SK-N-SH (cell line): ENCODE measurements at regions of chr5 and their contacts with region 1.

Region 1: GRCh38 chr5:159133041-159133741 is 33.5 kb upstream of the EBF1 start:
- DNase-seq: peak; percentile 32
- H3K4me3 ChIP-seq: no peak overlapping the region; a peak in 1 of 4 replicates
- H3K27ac ChIP-seq: no peak overlapping the region
- H3K4me1 ChIP-seq: no peaks in the 10 kb centered on the region; a peak in 2 of 4 replicates
- H3K27me3 ChIP-seq: no peaks in the 10 kb centered on the region; the same call in 1 of the 2 replicates
- CTCF ChIP-seq: peak; percentile 84
- EP300 ChIP-seq: no peak
- RAD21 ChIP-seq: peak; percentile 89

Region 2: DNA sequence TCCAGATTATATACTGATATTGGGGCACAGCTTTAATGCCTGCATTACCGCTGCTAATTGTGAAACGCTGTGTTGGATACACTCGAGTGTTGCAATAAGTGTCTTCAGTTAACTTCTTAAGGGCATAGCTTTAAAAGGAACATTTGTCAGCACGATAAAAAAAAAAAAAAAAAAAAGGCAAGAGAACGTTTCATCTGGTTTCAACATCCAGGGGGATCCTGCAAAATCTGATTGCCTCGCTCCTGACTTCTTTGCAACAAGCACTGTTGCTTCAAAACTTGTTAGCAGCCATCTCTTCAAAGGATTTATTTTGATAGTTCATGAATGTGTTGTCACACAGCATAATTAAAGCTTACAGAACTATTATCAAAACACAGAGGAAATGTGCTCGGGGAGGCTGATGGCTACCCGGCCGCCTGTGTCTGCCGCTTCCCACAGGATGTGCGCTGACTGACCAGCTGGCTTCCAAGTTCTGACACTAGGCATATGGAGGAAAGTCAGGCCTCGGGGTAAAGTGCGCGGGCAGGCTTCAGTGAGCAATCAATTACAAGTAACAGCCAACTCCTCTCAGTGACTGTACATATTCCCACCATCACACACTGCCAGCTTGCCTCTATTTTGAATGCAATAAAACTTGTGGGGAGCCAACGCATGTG is 111.2 kb before region 1 on chr5:
- CTCF ChIA-PET with region 1: no interaction called
- POLR2A ChIA-PET with region 1: no interaction called
- DNase-seq: peak; percentile 70
- H3K4me3 ChIP-seq: peak overlapping the region in 1 of 2 experiments; percentile 12; a peak in 1 of 4 replicates
- H3K27ac ChIP-seq: peak overlapping the region in 1 of 2 experiments; percentile 99; a peak in 3 of 4 replicates
- H3K4me1 ChIP-seq: peaks cover 12 to 33% of the 10 kb centered on the region in 2 experiments; a peak in 3 of 4 replicates
- H3K27me3 ChIP-seq: no peaks in the 10 kb centered on the region
- CTCF ChIP-seq: no peak
- EP300 ChIP-seq: peak in 1 of 2 experiments; percentile 90; a peak in 2 of 4 replicates
- RAD21 ChIP-seq: peak; percentile 31

Region 3: GRCh38 chr5:159112436-159112835 is 20.8 kb before region 1 on chr5:
- CTCF ChIA-PET with region 1: interaction called, 16 read pairs
- POLR2A ChIA-PET with region 1: no interaction called
- DNase-seq: no peak
- H3K4me3 ChIP-seq: no peak overlapping the region
- H3K27ac ChIP-seq: no peak overlapping the region
- H3K4me1 ChIP-seq: no peaks in the 10 kb centered on the region
- H3K27me3 ChIP-seq: no peaks in the 10 kb centered on the region; the same call in 1 of the 2 replicates
- CTCF ChIP-seq: no peak
- EP300 ChIP-seq: no peak
- RAD21 ChIP-seq: no peak

Region 4: GRCh38 chr5:159149085-159149484 is 15.9 kb after region 1 on chr5:
- CTCF ChIA-PET with region 1: interaction called, 10 read pairs
- POLR2A ChIA-PET with region 1: no interaction called
- DNase-seq: no peak
- H3K4me3 ChIP-seq: no peak overlapping the region
- H3K27ac ChIP-seq: no peak overlapping the region
- H3K4me1 ChIP-seq: no peaks in the 10 kb centered on the region
- H3K27me3 ChIP-seq: no peaks in the 10 kb centered on the region; the same call in 1 of the 2 replicates
- CTCF ChIP-seq: no peak
- EP300 ChIP-seq: no peak
- RAD21 ChIP-seq: no peak

Region 5: DNA sequence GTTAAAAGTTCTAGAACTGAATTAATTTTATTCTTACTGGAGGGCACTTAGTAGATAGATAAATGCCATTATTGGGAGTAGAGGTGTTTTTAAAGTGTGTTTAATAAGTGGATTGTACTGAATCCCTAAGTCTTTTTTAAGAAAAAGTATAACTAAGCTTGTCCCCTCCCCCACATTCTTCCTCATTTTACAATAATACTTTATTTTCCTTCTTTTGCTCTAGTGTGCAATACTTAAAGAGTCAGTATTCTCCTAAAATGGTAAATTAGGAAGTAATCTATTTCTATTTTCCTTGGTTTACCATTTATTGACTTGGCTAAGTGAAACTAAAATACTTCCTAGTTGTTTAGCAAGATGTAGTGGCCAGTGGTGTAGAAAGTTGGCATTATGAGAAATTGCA is 141.5 kb after region 1 on chr5:
- CTCF ChIA-PET with region 1: no interaction called
- POLR2A ChIA-PET with region 1: no interaction called
- DNase-seq: no peak
- H3K4me3 ChIP-seq: no peak overlapping the region
- H3K27ac ChIP-seq: no peak overlapping the region
- H3K4me1 ChIP-seq: no peaks in the 10 kb centered on the region
- H3K27me3 ChIP-seq: no peaks in the 10 kb centered on the region
- CTCF ChIP-seq: no peak
- EP300 ChIP-seq: no peak
- RAD21 ChIP-seq: no peak